Activated T-helper 1 cell treated with anti-CD3 and anti-CD28 coated beads, Interleukin-12 subunit alpha, Interleukin-12 subunit beta, Interleukin-2, Interleukin-4 antibody, amounts not matched to agents 30 ng/mL and 10 ng/mL and 1 ng/mL, durations not matched to agents 14 hours and 24 hours and 36 hours (primary cell): ENCODE measurements at regions of chr6 and their contacts with region 1.

Region 1: DNA sequence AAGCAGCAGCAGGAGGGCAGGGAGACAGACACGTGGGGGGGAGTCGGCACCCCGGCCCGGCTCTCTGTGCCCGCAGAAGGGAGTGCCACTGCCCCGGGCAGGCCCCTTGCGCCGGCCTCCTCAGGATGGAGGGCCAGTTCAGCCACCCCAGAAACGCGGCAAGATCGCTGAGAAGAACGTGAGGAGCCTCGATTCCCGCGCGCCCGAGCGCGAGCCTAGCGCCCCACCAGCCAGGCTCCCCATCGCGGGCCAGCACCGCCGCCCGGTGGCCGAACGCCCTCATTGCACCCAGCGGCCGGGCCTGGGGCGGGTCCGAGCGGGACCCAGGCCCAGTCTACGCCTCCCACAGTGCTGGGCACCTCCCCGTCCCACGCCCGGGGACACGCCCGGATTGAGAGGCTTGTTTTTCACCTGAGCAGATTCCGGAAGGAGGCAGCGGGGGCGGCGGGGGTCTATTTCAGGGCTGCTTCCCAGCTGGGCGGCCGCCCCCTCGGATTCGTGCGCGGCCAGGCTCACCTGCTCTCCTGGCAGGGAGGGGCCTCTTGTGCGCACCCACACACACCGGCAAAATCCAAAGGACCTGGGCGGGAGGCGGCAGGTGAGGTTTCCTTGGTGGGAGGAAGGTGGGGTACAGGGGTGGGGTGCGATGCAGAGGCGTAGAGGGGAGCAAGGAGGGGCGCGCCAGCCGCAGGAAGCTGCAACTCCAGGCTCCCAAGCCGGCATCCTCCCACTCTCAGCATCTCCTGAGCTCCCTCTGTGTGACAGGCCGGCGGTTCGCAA is 9.0 kb upstream of the GRM4 start:
- DNase-seq: peak; percentile 54
- H3K4me3 Mint-ChIP-seq: no peak overlapping the region
- H3K27ac Mint-ChIP-seq: peak overlapping the region; percentile 18
- H3K4me1 Mint-ChIP-seq: no peaks in the 10 kb centered on the region
- H3K27me3 Mint-ChIP-seq: peaks cover 52% of the 10 kb centered on the region

Region 2: DNA sequence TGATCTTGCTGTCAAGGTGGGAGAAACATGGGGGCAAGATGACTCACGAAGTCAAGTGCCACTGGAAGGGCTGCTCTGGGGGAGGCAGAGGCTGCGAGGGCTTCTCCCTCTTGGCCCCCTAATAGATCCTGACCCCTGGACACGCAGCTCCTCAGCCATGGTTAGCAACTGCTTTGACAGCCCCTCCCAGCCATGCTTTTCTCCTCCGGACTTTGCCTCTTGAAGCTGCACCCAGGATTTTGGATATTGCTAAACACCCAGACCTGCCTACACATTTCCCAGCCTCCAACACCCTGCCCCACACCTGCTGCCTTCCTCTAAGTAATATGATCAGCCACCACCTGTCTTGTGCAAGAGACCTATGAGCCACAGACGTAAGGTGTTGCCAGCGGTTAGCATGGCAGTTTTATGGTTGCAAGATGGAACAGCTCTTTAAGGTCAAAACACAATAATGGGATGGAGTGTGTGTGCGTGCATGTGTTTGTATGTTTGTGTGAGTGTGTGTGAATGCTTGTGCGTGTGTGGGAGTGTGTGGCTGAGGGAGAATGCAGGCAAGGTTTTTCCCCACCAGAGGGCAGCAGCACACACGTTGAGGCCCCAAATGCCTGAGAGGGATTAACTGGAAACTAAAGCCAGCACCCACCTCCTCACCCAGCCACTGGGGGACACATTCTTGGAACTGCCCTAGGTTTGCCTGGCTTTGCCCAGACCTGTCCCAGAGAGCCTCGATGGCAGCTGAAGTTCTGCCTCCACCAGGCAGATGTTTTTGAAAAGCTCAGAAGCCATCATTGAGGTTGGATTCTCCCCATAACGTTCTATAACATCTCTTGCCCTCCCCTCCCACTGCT is 410.6 kb before region 1 on chr6:
- intact Hi-C with region 1: loop called (anchors 1 kb)
- DNase-seq: peak; percentile 57
- H3K4me3 Mint-ChIP-seq: no peak overlapping the region
- H3K27ac Mint-ChIP-seq: no peak overlapping the region
- H3K4me1 Mint-ChIP-seq: no peaks in the 10 kb centered on the region
- H3K27me3 Mint-ChIP-seq: peaks cover 22% of the 10 kb centered on the region

Region 3: DNA sequence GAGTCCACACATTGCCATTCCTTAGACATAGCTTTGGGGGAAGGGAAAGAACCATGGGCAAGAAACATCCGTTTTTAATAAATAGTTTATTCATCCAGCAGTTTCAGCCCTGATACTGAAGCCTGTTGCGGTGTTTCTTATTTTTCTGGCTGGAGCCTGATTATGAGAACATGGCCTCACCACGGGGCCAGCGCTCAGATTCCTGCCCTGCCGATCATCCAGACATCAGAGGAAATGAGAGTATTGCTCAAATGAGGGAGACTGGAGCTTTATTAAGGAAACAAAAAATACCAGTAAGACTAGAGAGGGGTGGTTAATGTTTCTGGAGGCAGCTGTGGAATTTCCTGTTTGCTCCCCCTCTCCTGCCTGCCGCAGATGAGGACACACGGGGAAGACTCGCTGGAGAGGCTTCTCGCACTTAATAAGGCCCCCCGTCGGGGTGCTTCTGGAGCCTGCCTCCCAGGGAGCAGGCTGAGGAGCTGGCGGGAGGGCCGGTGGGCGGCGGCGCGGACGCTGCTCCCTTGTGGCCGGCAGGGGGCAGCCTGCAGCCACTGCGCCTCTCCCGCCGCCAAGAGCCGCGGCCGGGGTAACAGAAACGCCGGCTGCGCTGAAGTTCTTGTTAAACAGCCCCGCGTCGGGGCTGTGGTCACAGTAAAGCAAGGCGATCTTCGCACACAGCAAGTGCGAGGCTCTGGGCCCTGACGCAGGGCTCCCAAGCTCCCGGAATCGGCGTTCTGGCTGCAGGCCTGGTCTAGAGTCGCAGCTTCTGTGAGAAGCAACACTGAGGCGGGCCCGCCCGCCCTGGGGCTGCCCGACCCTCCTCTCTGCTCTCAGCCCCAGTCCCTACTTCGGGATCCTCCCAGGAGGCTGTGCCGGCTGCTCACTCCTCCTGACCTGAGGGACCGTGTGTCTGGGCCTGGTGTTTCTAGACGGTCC is 383.4 kb before region 1 on chr6:
- intact Hi-C with region 1: loop called (anchors 1 kb)
- DNase-seq: peak; percentile 38
- H3K4me3 Mint-ChIP-seq: no peak overlapping the region
- H3K27ac Mint-ChIP-seq: peak overlapping the region; percentile 13
- H3K4me1 Mint-ChIP-seq: no peaks in the 10 kb centered on the region
- H3K27me3 Mint-ChIP-seq: peaks cover 7% of the 10 kb centered on the region

Region 4: DNA sequence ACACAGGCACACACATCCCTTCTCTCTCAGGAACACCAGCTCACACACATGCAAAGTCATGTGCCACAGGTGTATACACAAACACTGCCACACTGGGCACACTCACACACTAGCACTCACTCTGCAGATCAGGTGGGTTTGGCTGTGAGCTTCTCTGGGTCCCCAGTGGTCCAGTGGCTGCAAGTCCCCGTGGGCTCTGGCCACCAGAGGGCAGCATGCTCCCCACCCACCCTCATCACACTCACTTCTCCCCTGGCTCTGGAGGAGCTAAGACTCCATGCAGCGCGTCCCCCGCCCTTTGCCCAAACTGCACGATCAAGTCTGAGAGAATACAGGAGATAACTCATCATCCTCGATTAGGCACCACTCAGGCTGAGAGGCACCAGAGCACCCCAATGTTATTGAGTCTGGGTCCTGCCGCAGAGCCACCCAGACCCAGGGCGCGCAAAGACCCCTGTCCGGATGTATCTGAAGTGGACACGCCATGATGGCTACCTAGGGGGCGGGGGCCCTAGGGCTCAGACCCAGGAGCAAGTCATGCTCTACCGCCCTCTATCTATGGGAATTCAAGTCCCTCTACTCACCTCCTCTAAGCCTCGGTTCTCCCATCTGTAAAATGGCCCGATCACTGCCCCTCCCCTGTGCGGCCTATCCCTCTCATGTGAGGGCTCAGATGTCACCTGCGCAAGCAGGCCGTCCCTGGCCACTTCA is 99.5 kb before region 1 on chr6:
- intact Hi-C with region 1: loop called (anchors 1 kb)
- DNase-seq: peak; percentile 31
- H3K4me3 Mint-ChIP-seq: no peak overlapping the region
- H3K27ac Mint-ChIP-seq: no peak overlapping the region
- H3K4me1 Mint-ChIP-seq: peaks cover 7% of the 10 kb centered on the region
- H3K27me3 Mint-ChIP-seq: peaks cover 3% of the 10 kb centered on the region